Calu3 (cell line): ENCODE measurements at regions of chr2 and their contacts with region 1.

Region 1: GRCh38 chr2:162591403-162592083 is 247.0 kb downstream of the KCNH7 start:
- DNase-seq: peak; percentile 9
- H3K4me3 Mint-ChIP-seq: peak overlapping the region; percentile 28
- H3K27ac Mint-ChIP-seq: peak overlapping the region; percentile 93
- H3K4me1 Mint-ChIP-seq: peaks cover 25% of the 10 kb centered on the region
- H3K27me3 Mint-ChIP-seq: no peaks in the 10 kb centered on the region
- CTCF ChIP-seq: no peak

Region 2: GRCh38 chr2:162333968-162334367 is 257.6 kb before region 1 on chr2:
- CTCF ChIA-PET with region 1: no interaction called
- intact Hi-C with region 1: no loop called
- DNase-seq: peak; percentile 52
- H3K4me3 Mint-ChIP-seq: no peak overlapping the region
- H3K27ac Mint-ChIP-seq: no peak overlapping the region
- H3K4me1 Mint-ChIP-seq: no peaks in the 10 kb centered on the region
- H3K27me3 Mint-ChIP-seq: no peaks in the 10 kb centered on the region
- CTCF ChIP-seq: no peak

Region 3: DNA sequence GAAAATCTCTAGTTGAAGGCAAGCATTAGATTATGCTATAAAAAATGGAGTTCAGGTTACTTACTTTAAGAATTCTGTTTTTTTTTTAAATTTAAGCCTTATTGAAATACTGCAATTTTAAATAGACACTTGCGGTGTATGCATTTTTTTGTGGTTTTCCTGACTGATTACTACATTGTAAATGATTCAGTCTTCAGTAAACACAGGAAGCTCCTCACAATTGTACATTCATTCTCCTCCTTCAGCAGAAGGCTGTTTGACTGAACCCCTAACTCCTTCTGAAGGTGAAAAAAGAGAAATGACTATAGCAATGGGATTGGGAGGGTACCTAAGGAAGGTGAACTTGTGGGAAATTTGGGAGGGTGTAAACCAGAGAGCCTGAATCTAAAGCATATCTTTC is 111.5 kb before region 1 on chr2:
- CTCF ChIA-PET with region 1: no interaction called
- intact Hi-C with region 1: loop called (anchors 5 kb)
- DNase-seq: no peak
- H3K4me3 Mint-ChIP-seq: peak overlapping the region; percentile 65
- H3K27ac Mint-ChIP-seq: no peak overlapping the region
- H3K4me1 Mint-ChIP-seq: no peaks in the 10 kb centered on the region
- H3K27me3 Mint-ChIP-seq: no peaks in the 10 kb centered on the region
- CTCF ChIP-seq: no peak

Region 4: GRCh38 chr2:162538954-162539353 is 52.6 kb before region 1 on chr2:
- CTCF ChIA-PET with region 1: no interaction called
- intact Hi-C with region 1: no loop called
- DNase-seq: no peak
- H3K4me3 Mint-ChIP-seq: no peak overlapping the region
- H3K27ac Mint-ChIP-seq: no peak overlapping the region
- H3K4me1 Mint-ChIP-seq: no peaks in the 10 kb centered on the region
- H3K27me3 Mint-ChIP-seq: no peaks in the 10 kb centered on the region
- CTCF ChIP-seq: no peak

Region 5: GRCh38 chr2:162636206-162636728 is 44.7 kb after region 1 on chr2:
- CTCF ChIA-PET with region 1: no interaction called
- intact Hi-C with region 1: no loop called
- DNase-seq: no peak
- H3K4me3 Mint-ChIP-seq: no peak overlapping the region
- H3K27ac Mint-ChIP-seq: no peak overlapping the region
- H3K4me1 Mint-ChIP-seq: no peaks in the 10 kb centered on the region
- H3K27me3 Mint-ChIP-seq: no peaks in the 10 kb centered on the region
- CTCF ChIP-seq: no peak

Region 6: DNA sequence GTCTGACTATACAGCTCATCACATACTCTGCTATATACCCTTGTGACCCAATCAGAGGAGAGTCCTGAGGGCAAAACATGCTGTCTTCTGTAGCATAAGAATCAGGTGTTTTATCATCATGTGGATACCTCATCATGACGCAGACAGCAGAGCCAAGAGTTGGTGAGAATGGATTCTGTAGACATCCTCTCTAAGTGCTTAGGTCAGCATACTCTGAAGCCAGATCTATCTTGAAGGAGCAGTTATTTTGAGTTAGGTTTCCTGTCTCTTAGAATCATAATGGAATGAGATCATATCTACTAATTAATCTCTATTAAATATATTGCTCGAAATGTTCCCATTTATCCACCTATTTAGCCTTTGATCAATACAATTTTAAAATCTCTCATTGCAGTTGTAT is 437.3 kb after region 1 on chr2:
- CTCF ChIA-PET with region 1: no interaction called
- intact Hi-C with region 1: no loop called
- DNase-seq: no peak
- H3K4me3 Mint-ChIP-seq: no peak overlapping the region
- H3K27ac Mint-ChIP-seq: no peak overlapping the region
- H3K4me1 Mint-ChIP-seq: peaks cover 8% of the 10 kb centered on the region
- H3K27me3 Mint-ChIP-seq: no peaks in the 10 kb centered on the region
- CTCF ChIP-seq: no peak